ENCODE measurements at regions of chr20 and their contacts with region 1.

Region 1: DNA sequence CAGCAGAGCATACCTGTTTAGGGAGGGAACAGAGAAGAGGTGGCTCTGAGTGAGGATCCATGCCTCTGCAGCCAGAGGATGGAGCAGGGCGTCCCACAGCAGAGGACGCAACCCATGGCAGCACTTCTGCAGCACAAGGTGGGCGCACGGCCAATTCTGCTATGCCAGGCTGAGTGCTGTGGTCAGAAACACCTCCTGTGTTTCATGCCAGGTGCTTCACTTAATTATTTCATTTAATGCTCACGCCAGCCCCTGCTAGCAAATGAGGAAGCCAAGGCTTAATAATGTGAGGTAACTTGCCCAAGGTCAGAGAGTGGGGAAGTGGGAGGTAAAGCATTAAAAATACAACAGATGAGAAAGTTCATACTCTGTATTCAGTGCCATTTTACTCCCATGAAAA is 68.5 kb upstream of the PTGIS start:
- DNase-seq: no peak

Region 2: DNA sequence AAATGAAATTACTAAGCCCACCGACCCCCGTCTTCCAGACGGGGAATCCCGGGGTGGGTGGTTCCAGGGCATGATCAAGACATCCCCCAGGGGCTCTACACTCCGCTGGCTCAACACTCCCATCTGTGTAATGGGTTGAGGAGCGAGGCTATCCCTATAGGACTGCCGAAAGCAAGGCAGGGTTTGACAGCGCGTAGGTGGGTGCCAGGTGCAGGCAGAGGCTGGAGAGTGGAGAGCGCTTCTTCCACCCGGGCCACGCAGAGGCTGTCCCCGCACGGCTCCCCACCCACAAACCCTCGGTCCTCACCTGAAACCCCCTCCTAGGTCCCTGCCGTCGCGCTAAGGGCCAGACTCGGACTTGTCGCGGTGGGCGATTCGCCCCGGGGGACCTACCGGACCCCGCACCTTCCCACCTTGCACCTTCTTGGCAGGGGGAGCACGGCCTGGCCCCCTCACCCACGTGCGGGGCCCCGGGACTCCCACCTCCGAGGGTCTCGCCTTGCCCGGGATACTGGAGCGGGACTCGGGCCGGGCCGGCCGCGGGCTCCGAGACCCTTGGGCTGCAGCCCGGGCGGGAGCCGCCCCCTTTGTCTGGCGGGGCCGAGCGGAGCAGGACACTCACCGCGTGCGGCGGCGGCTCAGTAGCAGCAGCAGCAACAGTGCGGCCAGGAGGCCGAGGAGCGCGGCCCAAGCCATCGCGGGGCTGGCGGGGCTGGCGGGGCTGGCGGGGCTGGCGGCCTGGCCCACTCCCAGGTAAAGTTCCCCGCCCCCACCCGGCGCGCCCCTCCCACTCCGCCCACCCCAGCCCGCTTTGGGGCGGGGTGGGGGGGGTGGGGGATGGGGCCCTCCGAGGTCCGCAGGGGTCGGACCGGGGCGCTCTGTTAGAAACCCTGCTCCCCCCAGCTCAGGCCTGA is 68.8 kb before region 1 on chr20 and contains the start of gene PTGIS:
- intact Hi-C with region 1: loop called in 1 of 2 experiments (anchors 2 kb)
- DNase-seq: peak; percentile 89
- total RNA-seq, gene PTGIS: 359 to 447 TPM

Region 3: DNA sequence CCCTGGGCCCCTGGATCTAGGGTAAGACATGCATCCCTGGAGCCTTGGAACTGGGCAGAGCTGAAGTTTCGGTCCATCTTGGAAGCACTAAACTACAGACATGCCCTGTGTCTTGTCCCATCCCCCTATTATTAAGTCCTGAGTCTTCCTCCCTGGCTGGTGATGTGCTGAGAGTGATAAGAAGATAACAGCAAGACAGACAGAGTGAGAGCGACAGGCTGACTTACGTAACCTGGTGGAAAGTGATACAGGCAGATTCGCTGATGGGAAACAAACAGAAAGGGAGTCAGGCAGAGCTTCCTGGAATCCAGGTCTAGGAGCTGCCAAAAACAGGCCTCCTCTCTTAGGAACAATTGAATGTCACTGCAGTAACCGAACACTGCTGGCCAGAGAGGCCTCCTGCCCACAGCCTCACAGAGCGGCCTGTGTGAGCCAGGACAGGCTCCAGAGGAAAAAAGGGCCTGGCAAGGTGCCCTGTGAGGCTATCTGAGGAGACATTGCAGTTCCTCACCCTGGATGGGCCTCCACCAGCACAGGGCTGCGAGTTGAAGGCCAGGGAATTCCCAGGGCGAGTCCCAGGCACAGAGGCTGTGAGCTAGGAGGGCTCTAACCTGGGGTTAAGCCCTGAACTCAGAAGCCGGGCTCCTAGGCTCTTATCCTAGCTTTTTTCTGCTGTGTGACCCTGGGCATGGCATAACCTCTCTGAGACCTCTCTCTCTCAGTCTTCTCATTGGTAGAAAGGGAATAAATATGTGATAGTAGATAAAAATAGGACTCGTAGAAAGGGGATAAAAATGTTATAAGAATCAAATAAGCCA is 111.5 kb after region 1 on chr20:
- intact Hi-C with region 1: no loop called
- DNase-seq: peak; percentile 97

Measured in posterior vena cava (tissue), 2 donors.